ENCODE measurements at regions of chr12 and their contacts with region 1.

Region 1: DNA sequence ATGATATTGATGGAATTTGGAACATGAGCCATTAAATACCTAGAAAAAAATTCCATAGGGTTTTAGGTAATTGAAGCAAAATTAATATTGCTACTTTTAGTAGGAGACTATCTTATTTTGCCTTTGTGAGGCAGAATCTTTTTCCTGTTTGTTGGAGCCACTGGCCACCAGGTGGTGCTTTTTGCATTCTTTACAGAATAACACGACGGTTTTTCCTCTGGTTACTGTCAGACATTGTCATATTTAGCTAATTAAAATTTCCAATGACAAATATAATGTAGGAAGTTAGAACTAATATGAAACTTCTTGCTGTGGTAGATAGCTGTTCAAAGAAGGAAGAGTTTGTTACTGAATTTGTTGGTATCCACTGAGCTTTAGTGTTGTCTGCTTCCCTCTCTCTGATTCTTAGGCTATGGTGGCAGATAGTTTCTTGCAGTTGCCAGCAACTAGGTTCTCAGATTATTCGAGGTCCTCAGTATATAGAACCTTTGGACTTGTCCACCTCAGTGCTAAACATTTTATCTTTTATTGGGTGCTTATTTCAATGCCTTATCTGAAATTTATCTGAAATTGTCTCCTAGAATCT is 25.7 kb downstream of the RAB21 start:
- DNase-seq: peak in 7 of 9 donors; percentile 14 to 61 (median 50)
- ATAC-seq: peak; percentile 68
- H3K4me3 ChIP-seq: no peak overlapping the region
- H3K4me3 Mint-ChIP-seq: no peak overlapping the region
- H3K27ac ChIP-seq: peak overlapping the region; percentile 38
- H3K27ac Mint-ChIP-seq: peak overlapping the region; percentile 9 to 83 (median 32)
- H3K4me1 ChIP-seq: no peaks in the 10 kb centered on the region
- H3K4me1 Mint-ChIP-seq: peaks cover 0 to 23% (median 6%) of the 10 kb centered on the region in 7 donors
- H3K27me3 ChIP-seq: no peaks in the 10 kb centered on the region
- H3K27me3 Mint-ChIP-seq: no peaks in the 10 kb centered on the region

Region 2: DNA sequence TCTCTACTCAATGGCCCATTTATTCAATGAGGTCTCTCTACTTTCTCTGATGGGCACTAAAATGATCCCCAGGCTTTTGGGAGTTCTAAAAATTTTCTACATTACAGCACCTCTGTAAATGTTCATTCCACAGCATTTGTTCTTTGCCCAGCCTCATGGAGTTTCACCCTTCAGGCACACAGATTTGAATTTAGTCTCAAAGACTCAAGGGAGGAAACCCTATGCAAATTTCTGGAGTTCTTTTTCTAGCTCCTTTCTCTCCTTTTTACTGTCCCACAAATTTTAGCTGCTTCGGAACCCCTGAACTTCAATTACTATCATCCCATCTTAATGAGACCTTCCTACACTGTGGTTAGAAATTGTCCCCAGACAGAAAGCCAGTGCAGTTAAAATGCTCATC is 43.1 kb before region 1 on chr12:
- CTCF ChIA-PET with region 1: no interaction called
- POLR2A ChIA-PET with region 1: no interaction called
- intact Hi-C with region 1: no loop called
- DNase-seq: no peak
- ATAC-seq: no peak
- H3K4me3 ChIP-seq: no peak overlapping the region
- H3K4me3 Mint-ChIP-seq: no peak overlapping the region
- H3K27ac ChIP-seq: no peak overlapping the region
- H3K27ac Mint-ChIP-seq: no peak overlapping the region
- H3K4me1 ChIP-seq: no peaks in the 10 kb centered on the region
- H3K4me1 Mint-ChIP-seq: no peaks in the 10 kb centered on the region
- H3K27me3 ChIP-seq: no peaks in the 10 kb centered on the region
- H3K27me3 Mint-ChIP-seq: peaks cover 0 to 8% (median 0%) of the 10 kb centered on the region in 5 donors

Region 3: GRCh38 chr12:71766202-71766601 is 14.1 kb before region 1 on chr12:
- CTCF ChIA-PET with region 1: interaction called, 3 read pairs
- POLR2A ChIA-PET with region 1: no interaction called
- intact Hi-C with region 1: loop called in 1 of 2 experiments (anchors 1 kb)
- DNase-seq: no peak
- ATAC-seq: no peak
- H3K4me3 ChIP-seq: no peak overlapping the region
- H3K4me3 Mint-ChIP-seq: peak overlapping the region in 3 of 10 donors; percentile 16 to 70 (median 34)
- H3K27ac ChIP-seq: no peak overlapping the region
- H3K27ac Mint-ChIP-seq: peak overlapping the region in 3 of 9 donors; percentile 6 to 40 (median 38)
- H3K4me1 ChIP-seq: peaks cover 14 to 23% of the 10 kb centered on the region in 2 donors
- H3K4me1 Mint-ChIP-seq: peaks cover 23 to 71% (median 64%) of the 10 kb centered on the region in 7 donors
- H3K27me3 ChIP-seq: no peaks in the 10 kb centered on the region
- H3K27me3 Mint-ChIP-seq: no peaks in the 10 kb centered on the region

Region 4: DNA sequence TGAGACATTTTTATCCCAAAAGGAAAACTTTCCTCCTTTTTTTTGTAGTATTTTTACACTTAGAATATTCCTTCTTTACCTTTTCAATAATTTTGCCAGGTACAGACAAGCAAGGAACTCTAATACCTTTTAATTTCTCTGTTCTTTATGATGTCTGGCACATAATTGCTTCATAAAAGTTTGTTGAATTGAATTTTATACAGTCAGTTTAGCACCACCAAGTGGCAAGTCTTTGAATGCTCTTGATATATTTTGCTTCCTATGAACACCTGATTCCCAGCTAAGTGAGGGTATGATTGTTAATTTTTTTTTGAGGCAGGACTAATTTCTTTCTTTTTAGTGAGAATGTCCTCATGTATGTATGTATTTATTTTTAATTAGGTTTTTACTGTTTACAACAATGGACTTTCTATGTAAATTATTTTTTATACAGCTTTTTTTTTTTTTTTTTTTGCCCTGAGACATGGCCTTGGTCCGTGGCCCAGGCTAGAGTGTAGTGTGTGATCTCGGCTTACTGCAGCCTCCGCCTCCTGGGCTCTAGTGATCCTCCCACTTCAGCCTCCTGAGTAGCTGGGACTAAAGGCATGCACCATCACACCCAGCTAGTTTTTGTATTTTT is 66.1 kb after region 1 on chr12:
- CTCF ChIA-PET with region 1: interaction called, 38 read pairs
- POLR2A ChIA-PET with region 1: interaction called, 14 read pairs
- intact Hi-C with region 1: loop called (anchors 1 kb)
- DNase-seq: peak in 7 of 9 donors; percentile 21 to 59 (median 44)
- ATAC-seq: peak; percentile 70
- H3K4me3 ChIP-seq: no peak overlapping the region
- H3K4me3 Mint-ChIP-seq: peak overlapping the region in 3 of 10 donors; percentile 2 to 17 (median 5)
- H3K27ac ChIP-seq: peak overlapping the region; percentile 11
- H3K27ac Mint-ChIP-seq: peak overlapping the region in 6 of 9 donors; percentile 8 to 81 (median 40)
- H3K4me1 ChIP-seq: peaks cover 5 to 15% of the 10 kb centered on the region in 2 donors
- H3K4me1 Mint-ChIP-seq: peaks cover 17 to 53% (median 35%) of the 10 kb centered on the region in 7 donors
- H3K27me3 ChIP-seq: no peaks in the 10 kb centered on the region
- H3K27me3 Mint-ChIP-seq: no peaks in the 10 kb centered on the region

Region 5: DNA sequence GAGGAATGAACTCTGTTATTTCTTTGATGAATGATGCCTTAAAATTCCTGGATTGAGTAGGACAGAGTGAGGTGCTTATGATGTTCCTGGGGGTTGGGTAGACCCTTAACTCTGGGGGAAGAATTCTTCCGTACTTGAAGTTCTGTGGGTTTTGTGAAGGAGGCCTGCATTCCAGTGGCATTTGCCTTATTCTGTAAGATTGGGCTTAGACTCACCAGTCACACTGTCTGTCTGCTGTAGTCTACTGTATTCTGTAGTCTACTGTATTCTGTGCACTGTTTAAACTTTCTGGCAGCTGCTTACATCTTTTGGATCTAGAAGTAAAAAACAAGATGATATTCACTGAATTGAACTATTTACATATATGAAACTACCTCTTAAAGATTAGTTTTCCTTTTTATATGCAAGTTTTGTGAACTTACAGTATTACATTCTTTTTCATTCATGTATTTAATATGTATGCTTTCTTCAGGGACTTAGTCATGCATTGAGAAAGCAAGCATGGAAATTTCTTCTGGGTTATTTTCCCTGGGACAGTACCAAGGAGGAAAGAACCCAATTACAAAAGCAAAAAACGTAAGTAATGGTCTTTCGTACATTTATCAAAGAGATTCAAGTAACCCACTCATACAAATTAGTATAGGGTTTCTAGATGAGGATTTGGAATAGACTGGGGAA is 116.0 kb after region 1 on chr12:
- CTCF ChIA-PET with region 1: no interaction called
- POLR2A ChIA-PET with region 1: no interaction called
- intact Hi-C with region 1: no loop called
- DNase-seq: no peak
- ATAC-seq: no peak
- H3K4me3 ChIP-seq: no peak overlapping the region
- H3K4me3 Mint-ChIP-seq: peak overlapping the region in 1 of 10 donors; percentile 41
- H3K27ac ChIP-seq: no peak overlapping the region
- H3K27ac Mint-ChIP-seq: peak overlapping the region in 1 of 9 donors; percentile 26
- H3K4me1 ChIP-seq: no peaks in the 10 kb centered on the region
- H3K4me1 Mint-ChIP-seq: peaks cover under 1 to 9% (median 4%) of the 10 kb centered on the region in 7 donors
- H3K27me3 ChIP-seq: no peaks in the 10 kb centered on the region
- H3K27me3 Mint-ChIP-seq: no peaks in the 10 kb centered on the region

Region 6: DNA sequence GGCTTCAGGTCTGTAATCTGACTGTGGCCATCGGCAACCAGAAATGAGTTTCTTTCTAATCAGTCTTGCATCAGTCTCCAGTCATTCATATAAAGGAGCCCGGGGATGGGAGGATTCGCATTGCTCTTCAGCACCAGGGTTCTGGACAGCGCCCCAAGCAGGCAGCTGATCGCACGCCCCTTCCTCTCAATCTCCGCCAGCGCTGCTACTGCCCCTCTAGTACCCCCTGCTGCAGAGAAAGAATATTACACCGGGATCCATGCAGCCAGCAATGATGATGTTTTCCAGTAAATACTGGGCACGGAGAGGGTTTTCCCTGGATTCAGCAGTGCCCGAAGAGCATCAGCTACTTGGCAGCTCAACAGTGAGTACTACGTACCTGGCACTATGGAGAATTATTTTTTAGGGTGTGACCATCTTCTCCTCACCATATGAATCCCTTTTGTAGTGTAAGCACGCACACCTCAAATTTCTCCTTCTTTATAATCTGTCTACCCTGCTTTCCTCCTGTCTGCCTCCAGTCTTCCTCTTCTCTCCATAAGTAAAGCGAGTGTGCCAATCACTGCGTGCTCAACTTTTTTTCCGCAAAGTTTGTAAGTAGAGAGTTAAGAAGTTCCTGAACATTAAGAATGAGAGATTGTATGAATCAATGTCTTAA is 158.5 kb after region 1 on chr12 and contains the start of gene TPH2:
- CTCF ChIA-PET with region 1: no interaction called
- POLR2A ChIA-PET with region 1: no interaction called
- intact Hi-C with region 1: loop called in 1 of 2 experiments (anchors 1 kb)
- DNase-seq: peak; percentile 12 to 59 (median 32)
- ATAC-seq: peak; percentile 80
- H3K4me3 ChIP-seq: no peak within 1 kb of the TSS
- H3K4me3 Mint-ChIP-seq: no peak within 1 kb of the TSS
- H3K27ac ChIP-seq: no peak within 1 kb of the TSS
- H3K27ac Mint-ChIP-seq: peak within 1 kb of the TSS in 1 of 9 donors; percentile 26
- H3K4me1 ChIP-seq: no peaks in the 10 kb centered on the region
- H3K4me1 Mint-ChIP-seq: peaks cover 0 to 9% (median 0%) of the 10 kb centered on the region in 7 donors
- H3K27me3 ChIP-seq: no peaks in the 10 kb centered on the region
- H3K27me3 Mint-ChIP-seq: peaks cover 57 to 81% (median 62%) of the 10 kb centered on the region in 5 donors
- total RNA-seq, gene TPH2: 0.16 TPM in 1 of 5 experiments, not detected in the others

Measured in naive thymus-derived CD4-positive, alpha-beta T cell (primary cell).